HCT116 (cell line): ENCODE measurements at regions of chr18 and their contacts with region 1.

Region 1: DNA sequence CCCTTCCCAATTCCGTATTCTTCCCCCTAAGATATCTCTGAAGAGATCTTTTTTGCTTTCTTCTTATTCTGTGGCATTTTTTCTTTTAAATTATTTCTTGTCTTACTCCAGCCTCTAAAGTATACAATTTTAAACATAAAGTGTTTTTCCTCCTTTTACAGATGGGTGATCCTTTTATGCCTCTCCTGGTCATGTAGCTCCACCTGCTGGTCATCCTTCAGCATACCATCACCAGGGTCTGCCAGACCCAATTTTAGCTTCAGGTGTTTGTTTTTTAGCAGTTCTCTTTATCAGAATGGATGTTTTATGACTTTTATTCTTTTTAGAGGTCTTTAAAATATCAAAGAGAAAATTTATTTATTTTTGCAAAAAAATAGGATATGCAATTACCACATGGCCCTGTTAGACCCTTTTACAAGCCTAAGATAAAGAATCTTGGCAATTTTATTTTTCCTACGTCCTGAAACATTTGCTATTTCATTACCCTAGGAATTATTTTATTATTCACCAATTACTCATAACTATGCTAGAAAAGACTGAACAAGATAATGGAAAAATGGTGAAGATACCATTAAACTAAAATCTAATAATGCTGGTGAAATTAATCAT is 55.5 kb downstream of the PIGN start:
- DNase-seq: peak; percentile 35
- ATAC-seq: peak; percentile 71
- H3K4me3 ChIP-seq: no peak overlapping the region
- H3K27ac ChIP-seq: no peak overlapping the region
- H3K4me1 ChIP-seq: no peaks in the 10 kb centered on the region
- H3K27me3 ChIP-seq: no peaks in the 10 kb centered on the region
- CTCF ChIP-seq: peak; percentile 77 to 96 (median 88)
- POLR2A ChIP-seq: no peak
- RAD21 ChIP-seq: peak; percentile 87

Region 2: DNA sequence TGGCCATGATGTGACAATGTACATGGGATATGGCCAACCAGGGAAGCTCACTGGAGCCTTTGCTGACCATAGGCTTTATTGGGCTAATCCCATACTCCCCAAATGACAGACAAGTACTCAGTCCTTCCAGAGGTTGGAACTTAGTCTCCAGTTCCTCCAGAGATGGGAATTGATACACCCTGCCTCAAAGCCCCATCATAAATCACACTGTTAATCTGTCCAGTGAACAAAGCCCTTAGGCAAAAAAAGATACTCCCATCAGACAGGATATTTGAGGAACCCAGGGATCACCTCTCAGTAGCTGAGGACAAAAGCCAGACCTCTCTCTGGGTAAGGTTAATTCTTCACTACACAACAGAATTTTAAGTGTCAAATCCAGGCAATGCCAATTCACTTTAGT is 1045.6 kb before region 1 on chr18:
- CTCF ChIA-PET with region 1: no interaction called
- POLR2A ChIA-PET with region 1: no interaction called
- RAD21 ChIA-PET with region 1: no interaction called
- intact Hi-C with region 1: loop called (anchors 5 kb)
- DNase-seq: no peak
- ATAC-seq: no peak
- H3K4me3 ChIP-seq: no peak overlapping the region
- H3K27ac ChIP-seq: no peak overlapping the region
- H3K4me1 ChIP-seq: no peaks in the 10 kb centered on the region
- H3K27me3 ChIP-seq: no peaks in the 10 kb centered on the region
- CTCF ChIP-seq: no peak
- POLR2A ChIP-seq: no peak
- RAD21 ChIP-seq: no peak

Region 3: DNA sequence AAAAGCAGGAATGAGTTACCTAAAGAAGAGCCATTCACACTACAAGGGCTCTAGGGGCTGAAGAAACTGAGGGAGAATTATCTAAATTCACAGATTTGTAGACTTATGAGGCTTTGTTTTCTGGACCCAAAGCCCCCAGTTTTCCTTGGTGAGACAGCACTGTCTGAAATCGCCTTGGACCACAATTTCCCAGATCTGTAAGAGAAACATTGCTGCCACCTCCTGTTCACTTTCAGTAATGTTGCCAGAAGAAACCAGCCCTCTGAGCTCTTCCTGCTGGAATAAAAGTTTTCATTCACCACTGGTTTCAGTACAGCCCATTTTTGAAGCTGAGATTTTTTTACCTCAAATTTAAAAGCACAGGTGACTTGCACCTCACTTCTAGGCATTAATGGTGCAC is 628.9 kb before region 1 on chr18:
- CTCF ChIA-PET with region 1: interaction called, 8 read pairs
- POLR2A ChIA-PET with region 1: no interaction called
- RAD21 ChIA-PET with region 1: interaction called in 1 of 2 experiments, 3 read pairs
- intact Hi-C with region 1: loop called (anchors 5 kb)
- DNase-seq: peak; percentile 35
- ATAC-seq: peak; percentile 80
- H3K4me3 ChIP-seq: no peak overlapping the region
- H3K27ac ChIP-seq: no peak overlapping the region
- H3K4me1 ChIP-seq: no peaks in the 10 kb centered on the region
- H3K27me3 ChIP-seq: peaks cover 44% of the 10 kb centered on the region
- CTCF ChIP-seq: peak; percentile 54 to 71 (median 60); a peak in 5 of 6 replicates
- POLR2A ChIP-seq: no peak
- RAD21 ChIP-seq: peak; percentile 71

Region 4: DNA sequence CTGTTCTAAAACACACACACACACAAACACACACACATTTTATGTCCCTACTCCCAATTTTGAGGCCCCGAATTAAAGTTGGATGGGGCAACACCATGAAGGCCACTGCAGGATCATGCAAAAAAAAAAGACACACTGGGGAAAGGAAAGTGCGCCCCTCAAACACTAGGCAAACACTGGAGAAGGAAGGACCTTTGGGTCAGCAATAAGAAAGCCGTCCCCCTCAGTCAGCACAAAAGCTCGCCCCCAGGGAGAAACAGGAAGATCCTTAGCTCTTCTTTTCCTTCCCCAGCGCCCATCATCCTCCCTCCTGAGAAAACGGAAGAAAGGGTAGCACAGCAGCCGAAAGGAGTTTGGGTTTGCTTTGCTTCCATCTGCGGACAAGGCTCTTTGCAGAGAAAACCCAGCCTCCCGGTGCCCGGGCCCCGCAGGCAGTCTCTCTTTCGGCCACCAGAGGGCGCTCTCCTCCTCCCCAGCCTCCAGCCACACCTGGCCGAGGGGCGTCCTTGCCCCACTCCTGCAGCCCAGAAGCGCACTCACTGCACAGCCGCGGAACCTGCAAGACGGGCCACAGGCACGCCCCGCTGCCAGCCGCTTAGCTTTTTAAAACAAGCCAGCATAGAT is 549.7 kb before region 1 on chr18:
- CTCF ChIA-PET with region 1: interaction called, 16 read pairs
- POLR2A ChIA-PET with region 1: no interaction called
- RAD21 ChIA-PET with region 1: no interaction called
- intact Hi-C with region 1: loop called (anchors 1 kb)
- DNase-seq: peak; percentile 22
- ATAC-seq: peak; percentile 97
- H3K4me3 ChIP-seq: peak overlapping the region; percentile 39 to 46
- H3K27ac ChIP-seq: no peak overlapping the region
- H3K4me1 ChIP-seq: peaks cover 0 to 9% of the 10 kb centered on the region in 2 experiments; a peak in 2 of 4 replicates
- H3K27me3 ChIP-seq: no peaks in the 10 kb centered on the region
- CTCF ChIP-seq: peak; percentile 70 to 98 (median 95)
- POLR2A ChIP-seq: no peak
- RAD21 ChIP-seq: peak; percentile 79

Region 5: GRCh38 chr18:61825386-61825785 is 306.0 kb before region 1 on chr18:
- CTCF ChIA-PET with region 1: no interaction called
- POLR2A ChIA-PET with region 1: no interaction called
- RAD21 ChIA-PET with region 1: no interaction called
- intact Hi-C with region 1: no loop called
- DNase-seq: no peak
- ATAC-seq: no peak
- H3K4me3 ChIP-seq: no peak overlapping the region
- H3K27ac ChIP-seq: no peak overlapping the region
- H3K4me1 ChIP-seq: no peaks in the 10 kb centered on the region
- H3K27me3 ChIP-seq: peaks cover 5% of the 10 kb centered on the region; the same call in 1 of the 2 replicates
- CTCF ChIP-seq: no peak
- POLR2A ChIP-seq: no peak
- RAD21 ChIP-seq: no peak

Region 6: DNA sequence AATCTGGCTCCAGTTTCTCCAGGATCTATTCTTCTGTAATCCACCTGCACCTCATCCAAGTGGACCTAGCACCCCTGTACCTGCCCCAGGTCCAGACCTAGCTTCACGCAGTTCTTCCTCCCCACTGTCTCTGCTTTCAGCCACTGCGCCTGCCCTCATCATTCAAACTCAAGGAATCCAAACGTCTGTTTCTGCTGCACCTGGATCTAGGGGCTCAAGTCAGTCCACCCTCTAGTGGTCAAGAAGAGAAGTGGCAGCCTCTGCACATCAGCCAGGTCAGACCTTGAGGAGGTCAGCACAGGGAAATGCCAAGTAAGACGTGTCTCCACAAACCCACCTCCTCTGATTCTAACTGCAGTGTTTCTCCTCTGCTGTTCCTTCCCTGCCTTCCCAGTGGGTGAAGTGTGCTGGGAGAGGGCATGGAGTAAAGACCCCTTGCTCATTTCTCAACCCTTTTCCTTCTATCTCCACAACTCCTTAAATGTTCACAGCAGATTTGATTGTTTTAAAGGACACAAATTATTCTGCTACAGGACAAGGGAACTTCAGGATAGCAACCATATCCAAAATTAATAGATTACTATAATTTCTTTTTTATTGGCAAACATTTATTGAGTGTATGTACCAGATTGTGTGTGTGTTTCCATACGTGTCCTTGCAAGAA is 229.9 kb before region 1 on chr18:
- CTCF ChIA-PET with region 1: interaction called, 3 read pairs
- POLR2A ChIA-PET with region 1: no interaction called
- RAD21 ChIA-PET with region 1: no interaction called
- intact Hi-C with region 1: loop called (anchors 5 kb)
- DNase-seq: peak; percentile 53
- ATAC-seq: peak; percentile 97
- H3K4me3 ChIP-seq: no peak overlapping the region
- H3K27ac ChIP-seq: no peak overlapping the region
- H3K4me1 ChIP-seq: no peaks in the 10 kb centered on the region
- H3K27me3 ChIP-seq: 0 out of 2 replicates have a peak, but pooled peaks cover 3% of the 10 kb centered on the region
- CTCF ChIP-seq: peak; percentile 55 to 97 (median 94); a peak in 5 of 6 replicates
- POLR2A ChIP-seq: no peak
- RAD21 ChIP-seq: peak; percentile 64